Activated CD8-positive, alpha-beta T cell treated with anti-CD3 and anti-CD28 coated beads, Interleukin-2, amount 10 ng/mL, durations not matched to agents 7 days and 5 days (primary cell): ENCODE measurements at regions of chr7 and their contacts with region 1.

Region 1: GRCh38 chr7:100132697-100133151 is 6.0 kb downstream of the MBLAC1 start:
- DNase-seq: peak; percentile 79
- ATAC-seq: peak; percentile 78
- H3K4me3 Mint-ChIP-seq: no peak overlapping the region
- H3K27ac Mint-ChIP-seq: no peak overlapping the region
- H3K4me1 Mint-ChIP-seq: peaks cover 30% of the 10 kb centered on the region
- H3K27me3 Mint-ChIP-seq: no peaks in the 10 kb centered on the region

Region 2: DNA sequence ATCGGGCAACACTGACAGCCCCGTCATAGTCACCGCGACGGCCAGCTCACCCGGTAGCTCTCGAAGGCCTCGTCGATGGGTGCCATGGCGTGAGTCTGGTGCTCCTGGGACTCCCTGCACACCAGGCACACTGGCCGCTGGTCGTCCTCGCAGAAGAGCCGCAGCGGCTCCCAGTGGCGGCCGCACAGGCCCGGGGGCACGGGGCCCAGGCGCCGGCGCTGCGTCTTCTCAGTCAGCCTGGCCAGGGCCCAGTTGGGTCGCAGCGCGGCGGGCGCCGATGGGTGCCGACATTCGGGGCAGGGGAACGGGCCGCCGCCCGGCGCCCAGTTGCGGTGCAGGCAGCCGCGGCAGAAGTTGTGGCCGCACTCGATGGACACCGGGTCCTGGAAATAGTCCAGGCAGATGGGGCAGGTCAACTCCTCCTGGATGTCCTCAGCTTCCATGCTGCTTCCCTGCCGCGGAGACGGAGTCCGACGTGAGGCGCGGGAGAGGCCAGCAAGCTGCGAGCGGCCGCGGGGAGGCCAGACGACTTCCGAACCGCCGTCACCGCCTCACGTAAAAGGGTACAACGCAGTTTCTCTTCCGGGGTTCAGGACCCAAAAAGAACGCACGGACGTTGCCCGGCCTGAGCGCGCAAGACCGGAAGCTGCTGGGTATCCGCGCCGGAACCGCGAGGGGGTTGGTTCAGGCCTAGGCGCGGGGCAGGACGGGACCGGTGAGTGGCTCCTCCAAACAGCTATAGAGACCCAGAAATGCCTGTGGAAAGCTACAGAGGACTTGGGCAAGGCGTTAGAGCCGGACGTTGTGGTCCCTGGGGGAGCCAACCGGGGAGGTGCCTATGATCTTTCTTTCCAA is 213.5 kb before region 1 on chr7 and contains the start of gene TRIM4:
- CTCF ChIA-PET with region 1: interaction called, 12 read pairs
- POLR2A ChIA-PET with region 1: no interaction called
- DNase-seq: peak; percentile 93
- ATAC-seq: peak; percentile 98
- H3K4me3 Mint-ChIP-seq: peak within 1 kb of the TSS; percentile 97
- H3K27ac Mint-ChIP-seq: peak within 1 kb of the TSS; percentile 98
- H3K4me1 Mint-ChIP-seq: peaks cover 40% of the 10 kb centered on the region
- H3K27me3 Mint-ChIP-seq: no peaks in the 10 kb centered on the region
- total RNA-seq, gene TRIM4: 26.7 to 28.0 TPM

Region 3: DNA sequence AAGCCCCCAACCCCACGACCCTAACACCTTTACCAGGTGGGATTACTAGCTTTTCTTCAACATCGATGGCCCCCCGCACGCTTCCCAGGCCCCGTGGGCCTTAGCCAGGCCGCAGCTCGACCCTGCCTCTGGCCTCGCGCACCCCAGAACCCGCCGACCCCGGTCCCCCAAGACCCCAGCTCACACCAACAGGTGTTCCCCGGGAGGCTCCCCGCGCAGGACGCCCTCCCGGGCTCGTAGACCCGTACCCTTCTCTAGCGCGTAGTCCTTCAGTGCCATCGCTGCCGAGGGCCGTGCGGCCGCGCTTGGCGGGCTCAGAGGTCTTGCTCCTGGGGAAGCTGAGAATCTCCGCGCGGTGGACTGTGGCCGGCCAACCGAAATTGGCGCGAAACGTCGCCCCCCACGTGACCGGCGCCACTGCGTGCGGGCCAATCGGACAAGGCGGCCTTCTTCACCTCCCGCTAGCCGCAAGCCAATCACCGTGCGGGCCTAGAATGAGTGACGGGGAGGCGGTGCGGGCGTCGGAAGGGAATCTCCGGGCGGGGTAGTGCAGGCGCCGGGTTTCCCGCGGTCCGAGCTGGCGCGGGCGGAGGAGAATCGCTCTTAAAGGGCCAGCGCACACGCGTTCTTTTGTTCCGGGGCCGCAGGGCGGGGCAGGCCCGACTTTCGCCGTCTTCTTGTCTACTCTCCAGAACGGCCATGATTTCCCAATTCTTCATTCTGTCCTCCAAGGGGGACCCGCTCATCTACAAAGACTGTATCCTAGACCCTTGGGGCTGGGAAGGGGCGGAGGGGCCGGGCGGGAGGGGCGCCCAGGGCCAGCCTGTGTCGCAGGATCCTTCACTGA is 31.5 kb before region 1 on chr7 and contains the starts of genes AP4M1 and MCM7:
- CTCF ChIA-PET with region 1: interaction called, 24 read pairs
- POLR2A ChIA-PET with region 1: interaction called, 15 read pairs
- DNase-seq: peak; percentile 99
- ATAC-seq: peak; percentile 86
- H3K4me3 Mint-ChIP-seq: peak within 1 kb of the TSS; percentile 89
- H3K27ac Mint-ChIP-seq: peak within 1 kb of the TSS; percentile 92
- H3K4me1 Mint-ChIP-seq: peaks cover 40% of the 10 kb centered on the region
- H3K27me3 Mint-ChIP-seq: no peaks in the 10 kb centered on the region
- total RNA-seq, gene AP4M1: 10.8 to 13.0 TPM
- total RNA-seq, gene MCM7: 364 to 375 TPM

Region 4: DNA sequence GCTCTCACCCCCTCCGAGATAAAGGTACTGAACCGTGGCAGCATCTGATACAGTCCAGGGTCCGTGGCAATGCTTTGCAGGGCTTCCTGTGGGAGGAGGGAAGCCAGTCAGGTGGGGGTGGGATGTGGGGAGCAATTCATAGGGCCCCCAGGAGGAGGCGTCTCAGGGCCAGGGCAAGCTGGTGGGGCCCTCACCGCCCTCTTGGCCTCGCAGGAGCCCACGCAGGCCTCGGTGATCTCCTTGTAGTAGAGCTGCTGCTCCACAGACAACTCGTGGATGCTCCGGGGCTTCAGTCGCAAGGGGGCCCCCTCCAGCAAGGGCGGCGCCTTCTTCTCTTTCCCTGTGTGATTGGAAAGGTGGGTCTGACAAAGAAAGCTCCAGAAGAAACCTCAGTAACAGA is 20.8 kb before region 1 on chr7:
- CTCF ChIA-PET with region 1: no interaction called
- POLR2A ChIA-PET with region 1: no interaction called
- DNase-seq: no peak
- ATAC-seq: no peak
- H3K4me3 Mint-ChIP-seq: no peak overlapping the region
- H3K27ac Mint-ChIP-seq: no peak overlapping the region
- H3K4me1 Mint-ChIP-seq: peaks cover 5% of the 10 kb centered on the region
- H3K27me3 Mint-ChIP-seq: no peaks in the 10 kb centered on the region

Region 5: GRCh38 chr7:100158229-100159098 is 25.7 kb after region 1 on chr7 and contains the start of gene TRAPPC14:
- CTCF ChIA-PET with region 1: interaction called, 16 read pairs
- POLR2A ChIA-PET with region 1: interaction called, 4 read pairs
- DNase-seq: peak; percentile 94
- ATAC-seq: peak; percentile 87
- H3K4me3 Mint-ChIP-seq: peak within 1 kb of the TSS; percentile 80
- H3K27ac Mint-ChIP-seq: peak within 1 kb of the TSS; percentile 83
- H3K4me1 Mint-ChIP-seq: peaks cover 62% of the 10 kb centered on the region
- H3K27me3 Mint-ChIP-seq: no peaks in the 10 kb centered on the region
- total RNA-seq, gene TRAPPC14: 42.7 to 44.0 TPM

Region 6: DNA sequence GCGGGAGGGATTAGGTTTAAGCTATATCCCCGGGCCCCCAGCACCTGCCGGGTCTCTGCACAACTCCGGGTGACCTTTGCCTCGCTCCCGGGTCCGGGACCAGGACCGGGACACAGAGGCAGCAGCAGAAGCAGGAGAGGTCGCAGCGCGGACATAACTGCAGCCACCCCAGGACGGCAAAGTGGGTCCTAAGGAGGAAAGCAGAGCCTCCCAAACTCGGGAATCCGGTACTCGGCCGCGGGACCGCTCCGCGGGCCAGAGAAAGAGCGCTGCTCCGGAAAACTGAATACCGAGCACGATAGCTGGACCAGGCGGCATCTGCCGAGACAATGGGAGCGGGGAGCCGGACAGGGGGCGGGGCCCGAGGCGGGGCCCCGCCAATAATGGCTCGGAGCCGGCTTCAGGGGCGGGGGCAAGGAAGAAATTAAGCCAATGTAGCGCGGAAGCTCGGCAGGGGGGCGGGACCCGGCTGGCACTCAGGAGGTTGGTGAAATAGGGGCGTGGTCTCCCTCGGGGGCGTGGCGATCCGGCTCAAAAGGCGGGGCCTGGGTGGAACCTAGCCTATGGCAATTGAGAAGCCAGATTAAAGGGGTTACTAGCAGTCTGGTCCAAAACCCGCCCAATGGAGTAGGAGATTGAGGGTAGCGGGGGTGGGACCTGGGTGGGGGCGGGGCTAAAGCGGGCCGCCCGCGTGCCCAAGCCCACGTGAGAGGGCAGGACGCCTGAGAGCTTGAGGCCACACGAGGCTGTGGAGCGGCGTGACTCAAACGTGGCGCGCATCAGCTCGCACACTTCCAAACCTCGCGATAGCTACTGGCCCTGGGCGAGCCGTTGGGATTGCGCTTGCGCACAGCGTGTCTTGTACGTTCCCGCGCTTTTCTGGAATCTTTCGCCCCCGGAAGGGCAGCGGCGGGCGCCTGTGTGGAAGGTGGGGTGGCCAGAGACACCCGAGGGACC is 44.6 kb after region 1 on chr7 and contains the starts of genes GPC2 and STAG3:
- CTCF ChIA-PET with region 1: interaction called, 14 read pairs
- POLR2A ChIA-PET with region 1: interaction called, 4 read pairs
- DNase-seq: peak; percentile 99
- ATAC-seq: peak; percentile 91
- H3K4me3 Mint-ChIP-seq: peak within 1 kb of the TSS; percentile 77
- H3K27ac Mint-ChIP-seq: peak within 1 kb of the TSS; percentile 75
- H3K4me1 Mint-ChIP-seq: peaks cover 48% of the 10 kb centered on the region
- H3K27me3 Mint-ChIP-seq: peaks cover 18% of the 10 kb centered on the region
- total RNA-seq, gene GPC2: 8.1 to 8.2 TPM
- total RNA-seq, gene STAG3: 16.5 to 20.6 TPM

Region 7: DNA sequence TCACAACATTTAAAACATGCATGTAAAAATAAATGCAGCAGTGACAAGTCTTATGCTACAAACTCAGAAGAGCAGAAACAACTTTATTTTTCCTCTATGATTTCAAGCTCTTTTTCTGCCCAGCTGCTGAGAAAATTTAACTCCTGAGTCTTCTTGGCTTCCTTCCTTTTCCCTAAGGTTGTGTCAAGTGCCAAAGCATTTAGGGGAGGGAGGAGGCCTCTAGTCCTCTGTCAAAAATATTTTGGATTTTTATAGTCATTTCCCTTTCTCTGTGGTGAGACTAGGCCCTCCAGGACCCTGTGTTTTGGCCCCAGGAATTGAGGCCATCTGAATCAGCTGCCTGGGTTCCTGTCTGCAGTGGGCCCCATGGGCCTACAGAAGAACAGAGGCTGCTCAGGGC is 214.2 kb after region 1 on chr7:
- CTCF ChIA-PET with region 1: interaction called, 13 read pairs
- POLR2A ChIA-PET with region 1: no interaction called
- DNase-seq: no peak
- ATAC-seq: no peak
- H3K4me3 Mint-ChIP-seq: no peak overlapping the region
- H3K27ac Mint-ChIP-seq: peak overlapping the region; percentile 13
- H3K4me1 Mint-ChIP-seq: peaks cover 48% of the 10 kb centered on the region
- H3K27me3 Mint-ChIP-seq: no peaks in the 10 kb centered on the region